Activated CD4-positive, alpha-beta T cell treated with anti-CD3 and anti-CD28 coated beads, Interleukin-2, amount 10 ng/mL, durations not matched to agents 24 days and 14 days (primary cell): ENCODE measurements at regions of chr15 and their contacts with region 1.

Region 1: GRCh38 chr15:50484781-50485180 is 60.6 kb downstream of the USP8 start:
- DNase-seq: no peak
- H3K4me3 Mint-ChIP-seq: no peak overlapping the region
- H3K27ac Mint-ChIP-seq: peak overlapping the region; percentile 72
- H3K4me1 Mint-ChIP-seq: peaks cover 28% of the 10 kb centered on the region
- H3K27me3 Mint-ChIP-seq: no peaks in the 10 kb centered on the region

Region 2: DNA sequence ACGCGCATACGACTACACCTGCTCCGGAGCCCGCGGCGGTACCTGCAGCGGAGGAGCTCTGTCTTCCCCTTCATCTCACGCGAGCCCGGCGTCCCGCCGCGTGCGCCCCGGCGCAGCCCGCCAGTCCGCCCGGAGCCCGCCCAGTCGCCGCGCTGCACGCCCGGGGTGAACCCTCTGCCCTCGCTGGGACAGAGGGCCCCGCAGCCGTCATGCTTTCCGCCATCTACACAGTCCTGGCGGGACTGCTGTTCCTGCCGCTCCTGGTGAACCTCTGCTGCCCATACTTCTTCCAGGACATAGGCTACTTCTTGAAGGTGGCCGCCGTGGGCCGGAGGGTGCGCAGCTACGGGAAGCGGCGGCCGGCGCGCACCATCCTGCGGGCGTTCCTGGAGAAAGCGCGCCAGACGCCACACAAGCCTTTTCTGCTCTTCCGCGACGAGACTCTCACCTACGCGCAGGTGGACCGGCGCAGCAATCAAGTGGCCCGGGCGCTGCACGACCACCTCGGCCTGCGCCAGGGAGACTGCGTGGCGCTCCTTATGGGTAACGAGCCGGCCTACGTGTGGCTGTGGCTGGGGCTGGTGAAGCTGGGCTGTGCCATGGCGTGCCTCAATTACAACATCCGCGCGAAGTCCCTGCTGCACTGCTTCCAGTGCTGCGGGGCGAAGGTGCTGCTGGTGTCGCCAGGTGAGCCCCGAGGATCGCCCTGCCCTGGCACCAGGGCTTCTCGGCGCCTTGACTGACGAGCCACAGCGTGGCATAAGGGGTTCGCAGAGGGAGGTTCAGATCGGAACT is 302.4 kb before region 1 on chr15:
- intact Hi-C with region 1: loop called (anchors 10 kb)
- DNase-seq: peak; percentile 87
- H3K4me3 Mint-ChIP-seq: peak overlapping the region; percentile 98
- H3K27ac Mint-ChIP-seq: peak overlapping the region; percentile 87
- H3K4me1 Mint-ChIP-seq: peaks cover 51% of the 10 kb centered on the region
- H3K27me3 Mint-ChIP-seq: no peaks in the 10 kb centered on the region

Region 3: GRCh38 chr15:50377867-50378751 is 106.7 kb before region 1 on chr15:
- intact Hi-C with region 1: loop called (anchors 1 kb)
- DNase-seq: no peak
- H3K4me3 Mint-ChIP-seq: peak overlapping the region; percentile 7
- H3K27ac Mint-ChIP-seq: peak overlapping the region; percentile 88
- H3K4me1 Mint-ChIP-seq: peaks cover 13% of the 10 kb centered on the region
- H3K27me3 Mint-ChIP-seq: no peaks in the 10 kb centered on the region

Region 4: DNA sequence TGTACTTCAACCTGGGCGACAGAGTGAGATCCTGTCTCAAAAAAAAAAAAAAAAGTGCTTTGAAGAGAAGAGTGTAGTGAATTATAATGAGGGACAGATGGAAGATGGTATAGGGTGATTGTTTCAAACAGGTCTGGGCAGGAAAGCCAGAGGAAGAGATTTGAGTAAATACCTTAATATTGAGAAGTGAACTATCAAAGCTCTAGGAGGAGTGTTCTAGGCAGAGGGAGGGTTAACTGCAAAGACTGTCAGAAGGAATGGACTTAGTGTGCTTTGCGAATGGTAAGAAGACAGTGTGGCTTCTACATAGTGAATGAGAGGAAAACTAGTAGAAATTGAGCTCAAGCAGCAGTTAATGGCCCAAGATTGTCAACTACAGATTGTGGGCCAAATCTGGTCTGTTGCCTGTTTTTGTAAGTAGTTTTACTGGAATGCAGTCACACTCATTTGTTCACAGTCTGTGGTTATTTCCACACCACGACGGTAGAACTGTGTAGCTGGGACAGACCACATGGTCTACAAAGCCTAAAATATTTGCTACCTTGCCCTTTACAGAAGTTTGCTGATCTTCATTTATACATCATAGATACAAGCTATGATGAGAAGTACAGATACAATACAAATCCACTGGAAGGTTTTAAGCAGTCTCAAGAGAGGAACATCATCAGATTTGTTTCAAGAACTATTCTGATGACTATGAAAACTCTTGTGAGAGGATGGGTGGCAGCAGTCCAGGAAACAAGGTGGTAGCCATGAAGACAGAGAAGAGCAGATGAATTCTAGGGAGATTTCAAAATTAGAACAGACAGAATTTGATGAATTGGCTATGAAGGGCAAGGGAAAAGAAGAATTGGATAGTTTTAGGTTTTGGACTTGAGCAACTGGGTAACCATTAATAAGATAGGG is 78.2 kb after region 1 on chr15:
- intact Hi-C with region 1: loop called (anchors 5 kb)
- DNase-seq: peak; percentile 76
- H3K4me3 Mint-ChIP-seq: peak overlapping the region; percentile 29
- H3K27ac Mint-ChIP-seq: peak overlapping the region; percentile 87
- H3K4me1 Mint-ChIP-seq: peaks cover 13% of the 10 kb centered on the region
- H3K27me3 Mint-ChIP-seq: no peaks in the 10 kb centered on the region

Region 5: DNA sequence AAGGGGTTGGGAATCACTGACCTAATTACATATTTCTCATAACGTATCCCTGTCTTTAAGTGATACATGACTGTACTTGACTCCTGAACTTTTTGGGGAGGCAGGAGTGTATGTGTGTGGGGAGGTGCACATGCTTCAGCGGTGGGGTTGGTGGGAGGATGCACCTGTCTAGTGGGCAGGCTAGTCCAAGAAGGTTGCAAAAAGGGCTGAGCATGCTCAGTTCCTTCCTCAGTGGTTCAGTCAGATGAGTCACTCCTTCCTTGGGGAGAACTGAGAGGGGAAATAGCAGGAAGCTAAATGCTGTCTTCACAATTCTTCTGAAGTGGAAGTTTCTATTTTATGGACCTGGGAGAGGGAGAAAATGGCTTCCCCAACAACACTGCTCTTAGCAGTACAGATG is 399.1 kb after region 1 on chr15:
- intact Hi-C with region 1: loop called (anchors 5 kb)
- DNase-seq: peak; percentile 81
- H3K4me3 Mint-ChIP-seq: peak overlapping the region; percentile 38
- H3K27ac Mint-ChIP-seq: peak overlapping the region; percentile 83
- H3K4me1 Mint-ChIP-seq: peaks cover 55% of the 10 kb centered on the region
- H3K27me3 Mint-ChIP-seq: no peaks in the 10 kb centered on the region